ENCODE measurements at regions of chr17 and their contacts with region 1.

Region 1: DNA sequence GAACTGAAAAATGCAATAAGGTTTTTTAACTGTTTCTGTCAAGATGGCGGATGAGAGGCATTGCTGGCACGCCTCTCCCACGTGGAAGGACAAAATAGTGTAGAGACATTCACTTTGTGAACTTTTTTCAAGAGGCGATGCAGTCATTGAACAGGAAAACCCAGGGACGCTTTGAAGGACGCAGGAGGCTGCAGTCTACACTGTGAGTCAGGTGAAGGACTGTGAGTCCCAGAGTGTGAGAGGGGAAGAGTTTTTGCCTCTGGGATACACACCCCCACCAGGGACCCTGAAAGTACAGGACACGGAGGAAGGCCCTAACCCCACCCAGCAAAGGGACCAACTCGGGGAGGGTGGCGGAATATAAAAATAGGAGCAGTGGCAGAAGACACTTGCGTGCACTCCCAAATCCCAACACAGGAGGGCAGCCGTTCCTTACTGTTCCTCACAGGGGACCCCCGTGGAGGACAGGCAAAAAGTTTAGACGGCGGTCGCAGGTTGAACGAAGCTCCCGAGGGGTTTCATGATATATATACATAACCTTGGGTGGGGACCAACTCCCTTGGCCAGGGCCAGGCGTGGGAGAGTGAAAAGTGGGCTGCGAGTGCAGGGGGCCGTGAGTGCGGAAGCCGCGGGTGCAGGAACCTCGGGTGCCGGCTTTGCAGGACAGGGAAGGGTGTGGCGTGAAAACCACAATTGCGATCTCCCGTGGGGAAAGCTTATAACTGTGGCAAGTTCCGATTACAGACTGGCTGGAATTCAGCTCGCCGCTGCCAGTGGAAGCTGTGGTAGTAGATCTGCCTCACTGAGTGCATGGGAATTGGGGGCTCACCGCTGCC is 82.0 kb upstream of the ALOX12 start:
- DNase-seq: peak; percentile 87
- ATAC-seq: peak; percentile 83
- H3K4me3 Mint-ChIP-seq: peak overlapping the region; percentile 71
- H3K27ac Mint-ChIP-seq: no peak overlapping the region
- H3K4me1 Mint-ChIP-seq: peaks cover 14% of the 10 kb centered on the region
- H3K27me3 Mint-ChIP-seq: peaks cover 26% of the 10 kb centered on the region

Region 2: DNA sequence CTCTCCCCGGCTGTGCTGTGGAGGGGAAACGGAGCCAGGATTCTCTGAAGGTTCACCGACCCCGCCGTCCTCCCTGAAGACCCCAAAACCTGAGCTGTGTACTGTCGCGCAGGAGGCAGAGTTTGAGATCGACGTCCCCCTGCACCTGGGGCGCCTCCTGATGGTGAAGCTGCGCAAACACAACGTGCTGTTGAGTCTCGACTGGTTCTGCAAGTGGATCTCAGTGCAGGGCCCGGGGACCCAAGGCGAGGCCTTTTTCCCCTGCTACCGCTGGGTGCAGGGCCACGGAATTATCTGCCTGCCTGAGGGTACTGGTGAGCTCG is 19.7 kb before region 1 on chr17:
- CTCF ChIA-PET with region 1: interaction called, 10 read pairs
- POLR2A ChIA-PET with region 1: no interaction called
- DNase-seq: peak; percentile 45
- ATAC-seq: no peak
- H3K4me3 Mint-ChIP-seq: no peak overlapping the region
- H3K27ac Mint-ChIP-seq: no peak overlapping the region
- H3K4me1 Mint-ChIP-seq: no peaks in the 10 kb centered on the region
- H3K27me3 Mint-ChIP-seq: peaks cover 22% of the 10 kb centered on the region

Region 3: GRCh38 chr17:6936370-6937028 is 22.7 kb after region 1 on chr17:
- CTCF ChIA-PET with region 1: interaction called, 10 read pairs
- POLR2A ChIA-PET with region 1: no interaction called
- DNase-seq: no peak
- ATAC-seq: no peak
- H3K4me3 Mint-ChIP-seq: peak overlapping the region; percentile 32
- H3K27ac Mint-ChIP-seq: no peak overlapping the region
- H3K4me1 Mint-ChIP-seq: peaks cover 23% of the 10 kb centered on the region
- H3K27me3 Mint-ChIP-seq: no peaks in the 10 kb centered on the region

Region 4: GRCh38 chr17:7021993-7022778 is 108.4 kb after region 1 on chr17:
- CTCF ChIA-PET with region 1: interaction called, 71 read pairs
- POLR2A ChIA-PET with region 1: no interaction called
- DNase-seq: peak; percentile 86
- ATAC-seq: peak; percentile 74
- H3K4me3 Mint-ChIP-seq: peak overlapping the region; percentile 8
- H3K27ac Mint-ChIP-seq: peak overlapping the region; percentile 55
- H3K4me1 Mint-ChIP-seq: peaks cover 73% of the 10 kb centered on the region
- H3K27me3 Mint-ChIP-seq: peaks cover 2% of the 10 kb centered on the region

Region 5: DNA sequence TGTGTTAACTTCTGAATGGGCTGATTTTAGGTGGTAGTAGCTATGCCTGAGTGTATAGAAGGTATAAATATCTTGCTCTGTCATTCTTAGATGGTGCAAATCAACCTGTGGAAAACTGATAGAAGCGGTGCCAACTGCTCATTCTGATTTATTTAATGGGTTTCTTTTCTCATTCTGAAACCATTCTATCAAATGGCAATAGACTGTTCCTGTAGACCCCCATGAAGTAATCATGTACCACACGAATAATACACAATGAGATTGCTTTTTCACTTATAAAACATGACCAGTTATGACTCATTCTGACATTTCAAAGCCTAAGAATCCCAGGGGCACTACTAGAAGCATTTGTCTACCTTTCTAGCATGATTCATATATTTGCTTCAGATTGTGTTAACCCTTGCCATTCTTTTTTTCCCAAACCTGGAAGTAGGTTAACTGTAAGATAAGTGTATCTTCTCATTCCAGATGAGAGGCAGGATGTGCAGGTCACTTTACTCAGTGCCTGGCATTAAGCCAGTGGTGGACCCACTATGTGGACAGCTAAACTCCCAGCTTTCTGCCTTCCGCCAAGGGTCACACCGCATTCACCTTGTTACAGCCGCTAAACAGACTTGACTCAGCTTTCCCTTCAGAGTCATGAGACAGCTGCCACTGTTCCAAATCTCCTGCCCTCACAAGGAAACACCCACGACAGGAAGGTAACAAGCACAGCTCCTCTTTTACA is 146.5 kb after region 1 on chr17:
- CTCF ChIA-PET with region 1: no interaction called
- POLR2A ChIA-PET with region 1: no interaction called
- DNase-seq: no peak
- ATAC-seq: no peak
- H3K4me3 Mint-ChIP-seq: no peak overlapping the region
- H3K27ac Mint-ChIP-seq: no peak overlapping the region
- H3K4me1 Mint-ChIP-seq: no peaks in the 10 kb centered on the region
- H3K27me3 Mint-ChIP-seq: peaks cover 9% of the 10 kb centered on the region